AG04450 (cell line): ENCODE measurements at regions of chr4 and their contacts with region 1.

Region 1: GRCh38 chr4:1130316-1131186 is 17.2 kb upstream of the RNF212 start:
- DNase-seq: peak; percentile 63
- H3K4me3 ChIP-seq: no peak overlapping the region
- H3K27ac ChIP-seq: no peak overlapping the region
- H3K27me3 ChIP-seq: peaks cover 33% of the 10 kb centered on the region
- CTCF ChIP-seq: peak; percentile 100

Region 2: DNA sequence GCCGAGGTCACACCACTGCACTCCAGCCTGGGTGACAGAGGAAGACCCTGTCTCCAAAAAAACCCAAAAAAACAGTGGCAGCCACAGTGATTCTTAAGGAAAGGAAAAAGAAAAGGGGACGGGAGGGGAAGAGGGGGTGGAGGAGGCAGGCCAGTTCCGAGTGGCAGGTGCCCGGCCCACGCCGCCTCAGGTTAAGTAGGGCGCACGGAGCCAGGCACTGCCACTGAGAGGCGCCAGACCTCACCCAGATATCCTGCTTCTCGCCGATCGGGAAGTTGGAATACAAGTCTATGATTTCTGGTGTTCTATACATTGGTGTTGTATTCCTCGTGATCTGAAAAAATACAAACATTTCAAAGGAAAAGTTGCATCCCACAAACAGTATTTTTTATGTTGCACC is 234.3 kb before region 1 on chr4:
- CTCF ChIA-PET with region 1: no interaction called
- POLR2A ChIA-PET with region 1: no interaction called
- DNase-seq: no peak
- H3K4me3 ChIP-seq: no peak overlapping the region
- H3K27ac ChIP-seq: no peak overlapping the region
- H3K27me3 ChIP-seq: no peaks in the 10 kb centered on the region
- CTCF ChIP-seq: no peak

Region 3: GRCh38 chr4:1116838-1117237 is 13.7 kb before region 1 on chr4:
- CTCF ChIA-PET with region 1: interaction called, 18 read pairs
- POLR2A ChIA-PET with region 1: no interaction called
- DNase-seq: no peak
- H3K4me3 ChIP-seq: no peak overlapping the region
- H3K27ac ChIP-seq: no peak overlapping the region
- H3K27me3 ChIP-seq: peaks cover 22% of the 10 kb centered on the region
- CTCF ChIP-seq: peak; percentile 25; the same call in 1 of the 2 replicates

Region 4: GRCh38 chr4:1266881-1267763 is 136.6 kb after region 1 on chr4:
- CTCF ChIA-PET with region 1: interaction called, 60 read pairs
- POLR2A ChIA-PET with region 1: no interaction called
- DNase-seq: no peak
- H3K4me3 ChIP-seq: no peak overlapping the region
- H3K27ac ChIP-seq: no peak overlapping the region
- H3K27me3 ChIP-seq: no peaks in the 10 kb centered on the region
- CTCF ChIP-seq: no peak

Region 5: DNA sequence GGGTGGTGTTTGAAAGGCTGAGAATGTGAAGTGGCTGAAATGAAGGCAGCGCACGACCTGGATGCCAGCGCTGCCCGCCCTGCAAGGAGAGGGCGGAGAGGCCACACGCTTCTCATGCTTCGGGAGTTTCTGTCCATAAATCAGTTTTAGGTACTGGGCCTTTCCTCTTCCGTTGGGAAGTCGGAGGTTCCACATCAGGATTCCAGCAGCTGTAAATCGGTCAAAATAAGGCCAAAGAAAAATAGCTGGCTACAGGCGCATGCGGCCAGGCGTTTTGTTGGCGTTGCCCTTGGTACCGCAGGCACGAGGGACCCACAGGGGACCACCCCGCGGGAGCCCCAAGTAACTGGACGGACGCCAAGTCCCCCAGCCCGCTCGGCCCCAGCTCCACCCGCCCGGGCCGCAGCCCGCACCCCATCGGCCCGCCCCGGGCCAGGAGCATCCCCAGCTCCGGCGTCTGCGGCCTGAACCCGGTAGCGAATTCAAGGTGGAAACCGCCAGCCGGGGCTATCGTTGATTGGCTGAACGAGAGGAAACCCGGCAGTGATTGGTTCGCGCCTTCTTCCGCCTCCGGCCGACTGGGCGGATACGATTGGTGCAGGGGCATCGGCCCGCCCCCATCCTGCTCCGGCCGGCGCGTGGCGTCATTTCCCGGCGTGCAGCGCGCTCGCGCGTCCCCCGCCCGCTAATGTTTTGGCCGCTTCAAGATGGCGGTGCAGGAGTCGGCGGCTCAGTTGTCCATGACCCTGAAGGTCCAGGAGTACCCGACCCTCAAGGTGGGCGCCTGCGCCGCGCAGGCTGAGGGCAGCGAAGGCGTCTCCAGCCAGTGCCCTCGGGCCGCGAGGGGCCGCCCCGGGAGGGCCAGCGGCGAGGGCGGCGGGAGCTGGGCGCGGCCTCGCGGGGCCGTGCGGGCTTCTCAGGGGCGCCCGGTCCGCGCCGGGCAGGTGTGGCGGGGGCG is 158.9 kb after region 1 on chr4 and contains the start of gene MAEA:
- CTCF ChIA-PET with region 1: interaction called, 11 read pairs
- POLR2A ChIA-PET with region 1: no interaction called
- DNase-seq: peak; percentile 84
- H3K4me3 ChIP-seq: peak within 1 kb of the TSS; percentile 79
- H3K27ac ChIP-seq: peak within 1 kb of the TSS; percentile 70
- H3K27me3 ChIP-seq: no peaks in the 10 kb centered on the region
- CTCF ChIP-seq: no peak
- polyA plus RNA-seq, gene MAEA: 73.3 and 77.6 TPM in 2 replicates

Region 6: DNA sequence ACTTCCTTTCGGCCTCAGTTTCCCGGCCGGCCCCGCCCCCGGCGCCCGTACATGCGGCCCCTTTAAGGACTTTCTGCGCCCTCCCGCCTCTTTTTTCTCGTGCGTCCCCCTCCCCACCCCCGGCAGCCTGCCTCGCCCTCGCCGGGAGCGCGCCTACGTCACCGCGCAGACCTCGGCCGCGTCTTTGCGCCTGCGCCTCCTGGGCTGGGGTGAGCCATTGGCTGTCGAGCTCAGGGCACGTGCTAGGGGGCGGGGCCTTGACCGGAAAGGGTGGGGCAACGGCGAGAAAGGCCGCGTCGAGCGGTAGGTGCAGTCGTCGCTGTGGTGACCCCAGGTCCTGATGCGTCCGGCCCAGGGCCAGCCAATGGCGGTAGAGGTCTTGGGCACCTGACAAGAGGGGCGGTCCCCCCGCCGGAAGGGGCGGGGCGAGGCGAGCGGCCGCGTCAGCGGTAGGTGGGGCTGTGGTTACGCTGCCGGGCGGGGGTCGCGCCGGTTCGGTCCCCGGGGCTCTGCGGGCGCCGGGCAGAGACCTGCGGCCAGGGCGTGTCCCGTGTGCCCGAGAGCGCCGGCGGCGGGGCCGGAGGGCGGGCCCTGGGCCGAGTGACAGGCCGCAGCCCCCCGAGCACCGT is 216.3 kb after region 1 on chr4 and contains the start of gene UVSSA:
- CTCF ChIA-PET with region 1: interaction called, 16 read pairs
- POLR2A ChIA-PET with region 1: no interaction called
- DNase-seq: peak; percentile 99
- H3K4me3 ChIP-seq: peak within 1 kb of the TSS; percentile 71
- H3K27ac ChIP-seq: peak within 1 kb of the TSS; percentile 93
- H3K27me3 ChIP-seq: no peaks in the 10 kb centered on the region
- CTCF ChIP-seq: no peak
- polyA plus RNA-seq, gene UVSSA: 4.9 and 5.2 TPM in 2 replicates

Region 7: GRCh38 chr4:1356181-1356998 is 225.8 kb after region 1 on chr4:
- CTCF ChIA-PET with region 1: interaction called, 16 read pairs
- POLR2A ChIA-PET with region 1: no interaction called
- DNase-seq: no peak
- H3K4me3 ChIP-seq: no peak overlapping the region
- H3K27ac ChIP-seq: no peak overlapping the region
- H3K27me3 ChIP-seq: no peaks in the 10 kb centered on the region
- CTCF ChIP-seq: peak; percentile 84